ENCODE measurements at regions of chr16 and their contacts with region 1.

Region 1: DNA sequence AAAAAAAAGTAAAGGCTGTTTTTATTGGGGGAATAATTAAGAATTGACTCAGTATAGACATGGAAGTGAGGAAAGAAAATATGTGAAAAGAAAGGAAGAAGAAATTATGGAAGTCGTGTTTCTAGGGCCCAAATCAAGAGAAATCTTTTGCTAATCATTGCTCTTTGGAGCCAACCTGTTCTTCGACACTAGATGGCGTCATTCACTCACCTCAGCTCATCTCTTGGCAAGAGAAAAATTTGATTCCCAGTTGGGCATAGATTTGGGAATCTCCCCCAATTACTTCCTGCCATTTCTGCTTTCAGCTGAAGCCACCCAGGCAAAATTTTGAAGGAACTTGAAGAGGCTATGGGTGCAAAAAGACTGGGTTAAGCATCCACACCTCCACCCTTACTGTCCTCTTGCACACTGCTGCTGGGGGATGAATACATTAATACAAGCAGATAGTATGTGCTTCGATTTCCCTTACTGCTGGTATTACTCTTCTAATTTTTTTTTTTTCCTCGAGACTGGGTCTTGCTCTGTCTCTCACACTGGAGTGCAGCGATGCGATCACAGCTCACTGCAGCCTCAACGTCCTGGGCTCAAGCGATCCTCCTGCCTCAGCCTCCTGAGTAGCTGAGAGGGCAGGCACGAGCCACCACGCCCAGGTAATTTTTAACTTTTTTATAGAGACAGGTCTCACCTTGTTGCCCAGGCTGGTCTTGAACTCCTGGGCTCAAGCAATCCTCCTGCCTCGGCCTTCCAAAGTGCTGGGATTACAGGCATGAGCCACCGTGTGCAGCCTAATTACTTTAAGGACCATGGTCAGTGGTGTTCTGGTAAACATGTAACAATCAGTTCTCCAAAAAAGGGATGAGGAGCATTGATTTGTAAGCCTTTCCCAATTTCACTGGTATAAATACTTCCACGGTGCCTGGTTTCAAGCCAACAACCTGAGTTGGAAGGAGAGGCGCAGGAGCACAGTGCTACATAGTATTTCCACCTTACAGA is 13.5 kb downstream of the PSMD7 start:
- DNase-seq: peak; percentile 41
- ATAC-seq: peak; percentile 72
- H3K4me3 ChIP-seq: no peak overlapping the region
- H3K27ac ChIP-seq: no peak overlapping the region
- H3K4me1 ChIP-seq: no peaks in the 10 kb centered on the region
- H3K27me3 ChIP-seq: no peaks in the 10 kb centered on the region
- CTCF ChIP-seq: peak; percentile 73 to 84 (median 80)
- POLR2A ChIP-seq: no peak
- RAD21 ChIP-seq: peak; percentile 89

Region 2: GRCh38 chr16:74431516-74431915 is 121.4 kb after region 1 on chr16:
- CTCF ChIA-PET with region 1: interaction called, 3 read pairs
- POLR2A ChIA-PET with region 1: no interaction called
- RAD21 ChIA-PET with region 1: no interaction called
- intact Hi-C with region 1: loop called (anchors 5 kb)
- DNase-seq: no peak
- ATAC-seq: no peak
- H3K4me3 ChIP-seq: no peak overlapping the region
- H3K27ac ChIP-seq: no peak overlapping the region
- H3K4me1 ChIP-seq: no peaks in the 10 kb centered on the region
- H3K27me3 ChIP-seq: no peaks in the 10 kb centered on the region
- CTCF ChIP-seq: no peak
- POLR2A ChIP-seq: no peak
- RAD21 ChIP-seq: no peak

Region 3: GRCh38 chr16:74623214-74623842 is 313.2 kb after region 1 on chr16:
- CTCF ChIA-PET with region 1: no interaction called
- POLR2A ChIA-PET with region 1: no interaction called
- RAD21 ChIA-PET with region 1: no interaction called
- intact Hi-C with region 1: loop called (anchors 2 kb)
- DNase-seq: no peak
- ATAC-seq: peak; percentile 75
- H3K4me3 ChIP-seq: no peak overlapping the region
- H3K27ac ChIP-seq: no peak overlapping the region
- H3K4me1 ChIP-seq: no peaks in the 10 kb centered on the region
- H3K27me3 ChIP-seq: no peaks in the 10 kb centered on the region
- CTCF ChIP-seq: peak; percentile 47 to 73 (median 57); a peak in 5 of 6 replicates
- POLR2A ChIP-seq: no peak
- RAD21 ChIP-seq: peak; percentile 87

Region 4: DNA sequence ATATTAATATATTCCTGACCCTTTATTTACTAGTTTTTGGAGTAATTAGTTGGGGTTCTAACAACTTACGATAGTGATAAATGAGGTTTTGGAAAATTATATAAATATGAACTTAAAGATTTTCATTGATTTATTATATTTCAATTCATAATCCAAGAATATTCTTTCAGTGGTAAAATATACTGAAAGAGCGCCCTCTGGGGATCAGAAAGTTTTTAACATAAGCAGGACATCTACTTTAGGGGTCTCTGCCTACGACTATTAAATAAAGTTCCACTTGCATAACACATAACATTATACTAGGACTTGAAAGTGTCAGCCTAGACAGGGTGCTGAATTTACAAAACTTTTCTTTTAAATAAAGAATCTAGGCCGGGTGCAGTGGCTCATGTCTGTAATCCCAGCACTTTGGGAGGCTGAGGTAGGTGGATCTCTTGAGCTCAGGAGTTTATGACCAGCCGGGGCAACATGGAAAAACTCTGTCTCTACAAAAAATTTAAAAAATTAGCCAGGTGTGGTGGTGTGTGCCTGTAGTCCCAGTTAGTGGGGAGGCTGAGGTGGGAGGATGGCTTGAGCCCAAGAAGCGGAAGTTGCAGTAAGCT is 341.0 kb after region 1 on chr16:
- CTCF ChIA-PET with region 1: interaction called, 4 read pairs
- POLR2A ChIA-PET with region 1: no interaction called
- RAD21 ChIA-PET with region 1: no interaction called
- intact Hi-C with region 1: loop called (anchors 10 kb)
- DNase-seq: peak; percentile 2
- ATAC-seq: no peak
- H3K4me3 ChIP-seq: no peak overlapping the region
- H3K27ac ChIP-seq: no peak overlapping the region
- H3K4me1 ChIP-seq: peaks cover 2 to 7% of the 10 kb centered on the region in 2 experiments; a peak in 3 of 4 replicates
- H3K27me3 ChIP-seq: no peaks in the 10 kb centered on the region
- CTCF ChIP-seq: peak; percentile 21 to 54 (median 46); a peak in 5 of 6 replicates
- POLR2A ChIP-seq: no peak
- RAD21 ChIP-seq: peak; percentile 45; the same call in 1 of the 2 replicates

Measured in HCT116 (cell line).